Endothelial cell of umbilical vein (primary cell): ENCODE measurements at regions of chr1 and their contacts with region 1.

Region 1: GRCh38 chr1:8077120-8077573 is 51.0 kb upstream of the ERRFI1 start:
- DNase-seq: peak; percentile 94
- H3K4me3 ChIP-seq: no peak overlapping the region
- H3K27ac ChIP-seq: peak overlapping the region; percentile 76
- H3K4me1 ChIP-seq: peaks cover 22% of the 10 kb centered on the region
- H3K27me3 ChIP-seq: no peaks in the 10 kb centered on the region
- CTCF ChIP-seq: no peak
- POLR2A ChIP-seq: no peak

Region 2: DNA sequence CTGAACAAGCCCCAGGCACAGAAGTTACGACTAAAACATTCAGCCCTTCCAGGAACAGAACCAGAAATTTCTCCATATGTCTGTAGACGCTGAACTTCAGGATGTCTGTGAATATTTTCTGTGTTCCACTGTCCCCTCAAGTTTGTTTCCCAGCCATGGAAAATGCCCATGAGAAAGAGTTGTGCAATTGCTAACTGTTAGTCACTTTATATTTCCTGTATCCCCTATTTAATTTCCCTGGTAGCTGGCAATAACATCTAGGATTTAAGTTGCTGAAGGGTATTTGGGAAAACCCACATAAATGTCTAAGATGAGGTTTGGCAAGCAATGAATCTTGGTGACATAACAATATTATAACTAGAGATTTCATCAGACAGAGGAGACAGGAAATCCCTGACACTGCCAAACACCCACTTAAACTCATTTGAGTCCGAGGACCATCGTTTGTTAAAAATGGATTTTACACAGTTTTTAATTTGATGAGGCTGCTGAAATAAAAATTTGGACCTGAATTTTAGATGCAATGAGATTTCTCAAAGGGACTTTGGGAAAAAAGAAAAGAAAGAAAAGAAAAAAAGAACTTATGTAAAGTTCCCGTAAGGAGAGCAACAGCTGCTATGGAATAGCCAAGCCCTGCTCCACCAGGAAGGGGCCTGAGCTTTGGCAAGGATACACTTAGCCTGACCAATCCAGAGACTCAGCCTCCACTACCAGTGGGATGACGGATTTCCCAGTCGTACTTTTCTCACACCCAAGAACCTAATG is 29.3 kb before region 1 on chr1:
- CTCF ChIA-PET with region 1: no interaction called
- POLR2A ChIA-PET with region 1: no interaction called
- dilution Hi-C with region 1: no loop called
- intact Hi-C with region 1: loop called (anchors 1 kb)
- DNase-seq: peak; percentile 90
- H3K4me3 ChIP-seq: no peak overlapping the region
- H3K27ac ChIP-seq: peak overlapping the region; percentile 81
- H3K4me1 ChIP-seq: peaks cover 29% of the 10 kb centered on the region
- H3K27me3 ChIP-seq: no peaks in the 10 kb centered on the region
- CTCF ChIP-seq: no peak
- POLR2A ChIP-seq: no peak

Region 3: DNA sequence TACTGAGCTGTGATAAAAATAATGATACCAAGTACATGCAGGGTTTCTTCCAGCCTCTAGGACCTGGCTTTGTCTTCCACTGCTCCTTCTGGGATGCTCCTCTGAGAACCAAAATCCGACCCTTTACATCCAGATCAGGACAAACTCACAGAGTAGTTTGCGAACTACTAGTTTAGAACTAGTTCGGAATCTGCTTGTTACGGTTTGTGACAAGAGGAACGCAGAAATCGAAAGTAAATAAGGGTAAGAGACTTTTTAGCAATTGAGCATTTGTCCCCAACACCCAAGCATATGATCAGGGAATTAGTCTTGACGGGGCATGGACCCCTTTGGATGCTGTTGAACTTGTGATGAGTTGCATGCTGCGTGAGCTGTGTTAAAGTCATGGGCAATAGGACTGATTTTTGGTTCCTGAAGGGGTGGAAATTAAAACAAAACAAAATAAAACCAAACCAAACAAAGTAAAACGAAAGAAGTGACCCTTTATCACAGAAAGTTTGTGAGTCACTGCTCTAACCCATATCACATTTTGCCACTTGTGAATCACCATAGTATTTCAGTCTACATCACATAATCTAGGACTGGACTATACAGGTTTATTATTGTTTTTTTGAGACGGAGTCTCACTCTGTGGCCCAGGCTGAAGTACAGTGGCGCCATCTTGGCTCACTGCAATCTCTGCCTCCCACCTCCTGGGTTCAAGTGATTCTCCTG is 15.3 kb before region 1 on chr1:
- CTCF ChIA-PET with region 1: interaction called, 7 read pairs
- POLR2A ChIA-PET with region 1: interaction called, 4 read pairs
- dilution Hi-C with region 1: no loop called
- intact Hi-C with region 1: loop called (anchors 2 kb)
- DNase-seq: peak; percentile 52
- H3K4me3 ChIP-seq: no peak overlapping the region
- H3K27ac ChIP-seq: peak overlapping the region; percentile 79
- H3K4me1 ChIP-seq: peaks cover 8% of the 10 kb centered on the region
- H3K27me3 ChIP-seq: no peaks in the 10 kb centered on the region
- CTCF ChIP-seq: no peak
- POLR2A ChIP-seq: no peak

Region 4: DNA sequence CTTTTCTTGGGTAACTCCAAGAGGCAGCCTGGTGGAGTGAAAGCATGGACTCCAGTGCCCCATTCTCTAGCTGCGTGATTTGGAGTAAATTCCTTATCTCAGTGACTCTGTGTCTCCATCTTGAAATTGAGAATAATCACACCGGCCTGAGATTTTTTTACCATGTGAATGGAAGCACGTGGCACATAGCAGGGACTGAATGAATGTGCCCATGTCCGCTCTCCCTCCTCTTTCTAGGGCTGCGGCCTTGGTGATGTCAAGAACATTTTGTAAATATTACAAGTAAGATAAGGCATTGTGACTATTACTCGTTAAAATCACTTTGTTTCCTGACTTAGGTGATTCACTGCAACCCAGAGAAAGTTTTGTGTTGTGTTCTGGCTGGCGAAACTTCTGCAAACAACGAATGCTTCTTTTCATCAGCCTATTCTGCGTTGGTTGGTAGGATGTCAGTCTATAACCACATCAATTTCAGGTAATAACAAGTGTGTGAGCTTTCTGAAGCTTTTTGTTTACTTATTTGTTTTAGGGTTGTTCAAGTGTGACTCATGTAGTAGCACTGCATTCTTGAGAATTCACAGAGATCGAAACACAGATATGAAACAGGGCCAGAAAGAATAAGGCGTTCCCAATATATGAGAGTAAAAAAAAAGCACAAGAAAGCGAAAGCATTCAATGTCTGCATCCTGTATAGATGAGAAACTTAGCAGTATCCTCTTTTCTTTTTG is 105.1 kb after region 1 on chr1:
- CTCF ChIA-PET with region 1: no interaction called
- POLR2A ChIA-PET with region 1: no interaction called
- dilution Hi-C with region 1: no loop called
- intact Hi-C with region 1: no loop called
- DNase-seq: peak; percentile 92
- H3K4me3 ChIP-seq: peak overlapping the region in 1 of 3 experiments; percentile 39
- H3K27ac ChIP-seq: peak overlapping the region; percentile 88
- H3K4me1 ChIP-seq: peaks cover 21% of the 10 kb centered on the region
- H3K27me3 ChIP-seq: no peaks in the 10 kb centered on the region
- CTCF ChIP-seq: no peak
- POLR2A ChIP-seq: peak; percentile 38